ENCODE measurements at regions of chr6 and their contacts with region 1.

Region 1: DNA sequence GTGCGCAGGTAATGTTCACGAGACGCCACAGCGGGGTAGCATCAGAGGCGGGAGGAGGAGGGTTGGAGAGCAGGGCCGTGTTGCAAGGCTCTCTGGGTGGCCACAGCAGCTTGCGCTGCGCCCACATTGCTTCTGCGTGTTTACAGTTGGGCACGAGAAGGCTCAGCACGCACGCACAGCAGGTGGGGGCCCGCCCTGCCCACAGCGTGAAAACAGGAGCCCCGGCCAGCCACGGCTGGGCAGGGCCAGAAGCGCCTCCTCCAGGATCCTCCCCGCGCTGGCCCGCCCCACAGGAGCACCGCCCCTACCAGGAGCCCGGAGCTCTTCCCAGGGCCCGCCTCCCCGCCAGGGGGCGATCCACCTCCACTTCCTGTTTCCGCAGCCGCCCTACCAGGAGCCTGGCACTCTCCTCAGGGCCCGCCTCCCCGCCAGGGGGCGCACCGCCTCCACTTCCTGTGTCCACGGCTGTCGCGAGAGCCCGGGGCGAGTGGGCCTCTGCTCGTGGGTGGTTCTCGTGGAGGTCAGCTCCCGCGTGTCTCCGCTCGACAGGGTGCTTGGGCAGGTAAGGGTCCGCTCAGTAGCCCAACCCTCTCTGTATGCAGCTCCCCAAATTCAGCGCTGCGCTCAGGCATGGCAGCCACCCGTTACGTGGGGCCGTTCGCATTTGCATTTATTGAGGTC is at the start of gene FAM50B:
- DNase-seq: peak; percentile 96

Region 2: DNA sequence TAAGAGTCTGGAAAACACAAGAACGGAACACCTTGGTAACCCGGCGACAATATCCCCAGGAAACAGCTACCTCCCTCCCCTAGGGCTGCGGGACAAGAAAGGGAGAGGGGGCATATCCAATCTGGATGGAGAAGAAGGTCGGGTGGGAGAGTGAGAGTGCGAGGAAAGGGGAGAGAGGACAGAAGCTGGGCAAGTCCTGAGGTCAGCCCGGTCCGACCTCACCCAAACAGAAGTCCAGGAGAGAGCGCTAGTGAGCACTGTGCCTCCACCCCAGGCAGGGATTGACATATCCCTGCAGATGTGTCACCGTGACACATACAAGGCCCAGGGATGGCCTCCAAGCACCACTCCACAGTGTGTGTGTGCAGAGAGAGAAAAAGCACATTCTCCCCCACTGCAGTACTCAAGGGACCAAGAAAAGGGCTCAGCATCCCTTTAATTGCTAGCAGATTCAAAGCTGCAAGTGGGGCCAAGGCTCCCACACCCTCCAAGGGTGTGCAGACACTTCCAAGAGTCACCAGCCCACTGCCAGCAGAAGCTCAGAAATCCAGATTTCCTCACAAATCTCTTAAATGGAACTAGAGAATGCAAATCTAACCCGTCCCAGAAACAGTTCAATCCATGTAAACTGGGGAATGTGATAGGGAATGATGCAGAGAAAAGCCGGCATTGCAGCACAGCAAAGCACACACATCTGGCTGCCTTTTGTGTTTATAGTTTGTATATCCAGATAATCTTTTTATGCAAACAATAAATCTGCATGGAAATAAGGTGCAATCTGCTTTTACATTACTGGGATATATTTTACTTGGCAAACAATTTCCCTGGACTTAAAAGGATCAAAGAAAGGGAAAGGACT is 100.6 kb before region 1 on chr6:
- CTCF ChIA-PET with region 1: interaction called, 28 read pairs
- POLR2A ChIA-PET with region 1: interaction called, 3 read pairs
- DNase-seq: peak; percentile 68

Region 3: GRCh38 chr6:3861424-3861823 is 12.4 kb after region 1 on chr6:
- CTCF ChIA-PET with region 1: interaction called, 11 read pairs
- POLR2A ChIA-PET with region 1: interaction called, 5 read pairs
- DNase-seq: no peak

Region 4: DNA sequence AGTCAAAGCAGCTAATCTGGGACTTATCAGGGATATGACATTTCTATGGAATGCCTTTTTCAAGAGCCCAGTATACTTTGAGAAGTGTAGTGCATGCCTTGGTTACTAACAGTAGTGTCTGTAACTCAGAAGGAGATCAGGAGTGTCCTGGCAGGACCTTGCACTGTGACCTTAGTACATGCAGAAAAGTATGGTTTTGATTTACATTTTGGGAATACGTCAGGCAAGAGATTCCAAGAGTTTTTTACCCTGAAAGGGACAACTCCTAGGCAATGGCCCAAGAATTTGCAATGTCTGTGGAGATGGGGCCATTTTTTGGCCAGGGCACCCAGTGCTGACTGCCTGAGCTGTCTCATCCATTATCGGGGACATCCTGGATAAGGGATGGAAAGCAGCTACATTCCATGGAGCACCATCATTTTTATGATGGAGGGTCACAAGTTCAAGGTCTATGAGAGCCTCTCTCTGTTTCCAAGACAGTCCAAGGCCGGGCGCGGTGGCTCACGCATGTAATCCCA is 80.3 kb after region 1 on chr6:
- CTCF ChIA-PET with region 1: interaction called, 44 read pairs
- POLR2A ChIA-PET with region 1: no interaction called
- DNase-seq: no peak

Region 5: DNA sequence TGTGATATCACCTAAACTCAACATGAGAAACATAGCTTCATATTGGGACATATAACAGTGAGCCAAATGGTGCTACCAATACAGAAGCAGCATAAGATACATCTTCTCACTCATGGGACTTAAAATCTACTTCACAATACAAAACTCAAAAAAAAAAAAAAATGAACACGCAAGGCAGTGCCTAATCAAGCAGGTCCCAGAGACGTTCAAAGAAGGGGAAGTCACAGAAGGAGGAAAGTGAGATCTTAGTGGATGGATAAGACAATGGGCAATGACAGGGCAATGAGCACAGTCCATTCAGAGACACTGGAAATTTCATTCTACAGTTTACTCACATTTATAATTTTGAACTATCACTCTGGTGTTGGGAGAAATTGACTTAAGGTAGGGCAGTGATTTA is 88.4 kb after region 1 on chr6:
- CTCF ChIA-PET with region 1: interaction called, 44 read pairs
- POLR2A ChIA-PET with region 1: no interaction called
- DNase-seq: no peak

Region 6: DNA sequence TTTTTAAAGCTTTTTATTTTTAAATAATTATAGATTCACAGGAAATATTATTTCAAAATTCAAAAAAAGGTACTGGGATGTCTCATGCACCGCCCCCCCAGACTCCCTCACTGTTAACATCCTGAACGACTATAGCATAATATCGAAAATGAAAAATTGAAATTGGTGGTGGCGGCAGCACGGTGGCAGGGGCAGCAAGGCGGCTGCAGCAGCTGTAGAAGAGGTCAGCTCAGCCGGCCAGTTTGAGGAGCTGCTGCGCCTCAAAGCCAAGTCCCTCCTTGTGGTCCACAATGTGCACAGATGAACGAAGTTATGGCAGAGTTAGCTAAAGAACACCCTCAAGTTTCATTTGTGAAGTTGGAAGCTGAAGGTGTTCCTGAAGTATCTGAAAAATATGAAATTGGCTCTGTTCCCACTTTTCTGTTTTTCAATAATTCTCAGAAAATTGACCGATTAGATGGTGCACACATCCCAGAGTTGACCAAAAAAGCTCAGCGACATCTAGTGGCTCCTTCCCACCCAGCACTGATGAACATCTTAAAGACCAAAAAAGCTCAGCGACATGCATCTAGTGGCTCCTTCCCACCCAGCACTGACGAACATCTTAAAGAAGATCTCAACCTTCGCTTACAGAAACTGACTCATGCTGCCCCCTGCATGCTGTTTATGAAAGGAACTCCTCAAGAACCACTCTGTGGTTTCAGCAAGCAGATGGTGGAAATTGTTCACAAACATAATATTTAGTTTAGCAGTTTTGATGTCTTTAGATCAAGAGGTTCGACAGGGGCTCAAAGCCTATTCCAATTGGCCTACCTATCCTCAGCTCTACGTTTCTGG is 129.0 kb after region 1 on chr6:
- CTCF ChIA-PET with region 1: interaction called, 22 read pairs
- POLR2A ChIA-PET with region 1: no interaction called
- DNase-seq: peak; percentile 42

Measured in HEK293T (cell line).